Activated T-helper 1 cell treated with anti-CD3 and anti-CD28 coated beads, Interleukin-12 subunit alpha, Interleukin-12 subunit beta, Interleukin-2, Interleukin-4 antibody, amounts not matched to agents 30 ng/mL and 10 ng/mL and 1 ng/mL, durations not matched to agents 14 hours and 24 hours and 36 hours (primary cell): ENCODE measurements at regions of chr17 and their contacts with region 1.

Region 1: DNA sequence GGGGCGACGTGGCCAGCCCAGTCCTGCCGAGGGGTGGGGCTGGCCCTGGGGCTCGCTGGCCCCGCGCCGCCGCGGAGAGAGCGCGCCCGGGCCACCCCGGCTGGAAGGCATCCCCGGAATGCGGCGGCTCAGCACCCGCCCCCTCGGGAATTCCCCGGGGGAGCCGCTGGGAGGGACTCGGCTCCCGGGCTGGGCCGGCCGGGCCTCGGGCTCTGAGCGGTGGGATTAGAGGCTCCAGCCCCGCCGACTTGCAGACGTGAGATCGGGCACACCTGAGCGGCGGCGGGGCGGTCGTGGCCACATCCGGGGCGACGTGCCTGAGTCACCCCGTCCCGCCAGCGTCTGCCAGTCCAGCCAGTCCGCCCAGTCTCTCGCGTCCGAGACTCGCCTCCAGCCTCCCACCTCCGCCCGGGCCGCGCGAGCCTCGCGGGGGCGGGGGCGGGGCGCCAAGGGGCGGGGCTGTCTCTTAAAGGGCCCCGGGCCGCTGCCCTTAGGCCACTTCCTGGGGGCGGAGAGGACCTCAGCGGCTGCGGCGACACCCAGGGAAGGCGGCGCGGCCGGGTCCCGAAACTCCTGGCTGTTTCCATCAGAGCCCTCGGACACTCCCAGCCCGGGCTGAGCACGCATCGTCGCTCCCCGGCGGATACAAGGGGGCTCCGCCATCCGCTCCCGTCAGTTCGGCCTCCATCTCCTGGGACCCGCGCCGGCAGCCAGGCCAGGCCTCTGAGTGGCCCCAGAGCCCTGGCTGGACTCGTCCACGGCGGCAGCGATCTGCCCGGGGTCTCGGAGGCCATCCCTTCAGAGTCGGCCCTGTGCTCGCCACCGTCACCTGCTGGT is at the start of gene KCTD11:
- DNase-seq: peak; percentile 76
- H3K4me3 Mint-ChIP-seq: peak within 1 kb of the TSS; percentile 84
- H3K27ac Mint-ChIP-seq: peak within 1 kb of the TSS; percentile 87
- H3K4me1 Mint-ChIP-seq: peaks cover 41% of the 10 kb centered on the region
- H3K27me3 Mint-ChIP-seq: no peaks in the 10 kb centered on the region
- total RNA-seq, gene KCTD11: 5.3 TPM in 2 replicates

Region 2: DNA sequence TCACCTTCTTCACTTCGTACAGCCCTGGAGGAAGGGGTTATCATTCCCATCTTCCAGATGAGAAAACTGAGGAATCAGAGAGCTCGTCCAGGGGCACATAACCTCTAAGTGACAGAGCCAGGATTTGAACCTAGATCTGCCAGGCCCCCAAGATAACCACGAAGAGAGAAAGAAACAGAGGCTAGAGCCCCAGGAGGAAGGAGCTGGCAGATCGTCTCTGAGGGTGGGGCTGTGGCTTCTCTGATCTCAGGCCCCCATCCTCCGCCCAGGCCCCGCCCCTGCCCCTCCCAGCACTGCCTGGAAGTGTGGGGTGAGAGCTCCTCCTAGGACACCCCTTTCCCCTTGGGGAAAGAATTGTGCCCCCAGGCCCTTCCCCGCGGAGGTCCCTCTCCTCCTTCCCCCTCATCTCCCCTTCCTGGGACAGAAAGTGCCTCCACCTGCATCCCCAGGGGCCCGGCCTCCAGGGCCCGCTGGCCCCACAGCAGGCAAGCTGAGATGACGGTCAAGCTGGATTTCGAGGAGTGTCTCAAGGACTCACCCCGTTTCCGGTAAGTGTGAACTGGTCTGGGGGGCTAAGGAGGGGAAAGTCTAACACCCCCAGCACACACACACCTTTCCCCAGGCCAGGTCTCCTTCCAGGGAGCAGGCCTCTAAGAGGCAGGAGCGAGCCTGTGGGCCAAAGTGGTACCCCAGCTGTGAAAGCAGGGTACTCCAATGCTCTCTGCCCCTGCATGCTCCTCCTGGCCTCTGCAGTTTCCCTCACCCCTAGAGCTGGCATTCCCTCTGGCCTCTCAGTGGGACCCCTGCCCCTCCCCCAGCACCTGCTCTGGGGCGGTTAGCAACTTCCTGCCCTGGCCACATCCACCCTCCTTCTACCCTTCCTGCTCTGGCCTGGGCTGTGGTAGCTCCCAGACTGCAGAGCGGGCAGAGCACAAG is 15.4 kb before region 1 on chr17 and contains the start of gene ACAP1:
- intact Hi-C with region 1: loop called (anchors 2 kb)
- DNase-seq: peak; percentile 76
- H3K4me3 Mint-ChIP-seq: peak within 1 kb of the TSS; percentile 91
- H3K27ac Mint-ChIP-seq: peak within 1 kb of the TSS; percentile 93
- H3K4me1 Mint-ChIP-seq: peaks cover 51% of the 10 kb centered on the region
- H3K27me3 Mint-ChIP-seq: no peaks in the 10 kb centered on the region
- total RNA-seq, gene ACAP1: 260 and 266 TPM in 2 replicates

Region 3: GRCh38 chr17:7502987-7503386 is 151.1 kb after region 1 on chr17:
- intact Hi-C with region 1: loop called (anchors 5 kb)
- DNase-seq: no peak
- H3K4me3 Mint-ChIP-seq: no peak overlapping the region
- H3K27ac Mint-ChIP-seq: no peak overlapping the region
- H3K4me1 Mint-ChIP-seq: no peaks in the 10 kb centered on the region
- H3K27me3 Mint-ChIP-seq: no peaks in the 10 kb centered on the region